ENCODE measurements at regions of chr5 and their contacts with region 1.

Region 1: DNA sequence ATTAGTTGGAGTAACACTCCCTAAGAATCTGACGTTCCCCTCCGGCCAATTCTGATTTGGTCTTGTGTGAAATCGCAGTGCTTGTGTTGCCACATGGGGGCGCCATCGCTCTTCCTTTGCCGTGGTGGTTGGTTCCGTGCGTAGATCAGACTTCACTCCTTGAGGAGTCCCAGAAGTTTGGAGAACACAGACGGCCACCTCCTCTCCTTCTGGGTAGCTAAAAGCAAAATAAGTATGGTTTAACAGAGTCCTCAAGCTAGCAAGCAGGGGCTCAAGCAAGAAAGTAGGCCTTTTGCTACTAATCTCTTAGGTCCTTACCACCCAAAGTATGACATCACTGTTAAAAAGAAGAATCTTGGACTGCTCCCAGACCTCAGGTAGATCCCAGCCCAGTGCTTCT is 59.5 kb downstream of the HSPA4 start:
- DNase-seq: peak; percentile 94
- H3K4me3 Mint-ChIP-seq: no peak overlapping the region
- H3K27ac Mint-ChIP-seq: no peak overlapping the region
- H3K4me1 Mint-ChIP-seq: peaks cover 28% of the 10 kb centered on the region
- H3K27me3 Mint-ChIP-seq: no peaks in the 10 kb centered on the region

Region 2: DNA sequence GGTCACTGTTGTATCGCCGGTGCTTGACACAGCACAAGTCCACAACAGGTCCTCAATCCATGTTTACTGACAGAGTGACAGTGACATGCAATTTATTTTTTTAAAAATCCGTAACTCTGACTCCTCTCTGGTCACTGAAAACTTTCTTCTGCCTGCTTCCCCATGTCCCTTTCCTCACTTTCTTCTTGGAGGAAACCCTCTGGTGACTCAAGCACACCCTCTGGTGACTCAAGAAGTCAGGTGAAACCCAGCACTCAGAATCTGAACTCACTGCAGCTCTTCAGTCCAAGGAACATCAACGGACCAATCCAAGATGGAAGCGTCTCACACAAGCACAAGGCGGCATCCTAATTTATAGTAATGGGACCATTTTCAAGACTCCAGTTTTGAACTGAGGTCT is 255.1 kb after region 1 on chr5:
- intact Hi-C with region 1: loop called (anchors 1 kb)
- DNase-seq: no peak
- H3K4me3 Mint-ChIP-seq: no peak overlapping the region
- H3K27ac Mint-ChIP-seq: no peak overlapping the region
- H3K4me1 Mint-ChIP-seq: no peaks in the 10 kb centered on the region
- H3K27me3 Mint-ChIP-seq: peaks cover 5% of the 10 kb centered on the region

Region 3: GRCh38 chr5:133460172-133460758 is 349.0 kb after region 1 on chr5:
- intact Hi-C with region 1: loop called (anchors 2 kb)
- DNase-seq: peak; percentile 78
- H3K4me3 Mint-ChIP-seq: no peak overlapping the region
- H3K27ac Mint-ChIP-seq: no peak overlapping the region
- H3K4me1 Mint-ChIP-seq: peaks cover 5% of the 10 kb centered on the region
- H3K27me3 Mint-ChIP-seq: peaks cover 2% of the 10 kb centered on the region

Region 4: GRCh38 chr5:133868946-133869518 is 757.7 kb after region 1 on chr5:
- intact Hi-C with region 1: loop called (anchors 5 kb)
- DNase-seq: peak; percentile 91
- H3K4me3 Mint-ChIP-seq: no peak overlapping the region
- H3K27ac Mint-ChIP-seq: peak overlapping the region; percentile 17
- H3K4me1 Mint-ChIP-seq: peaks cover 29% of the 10 kb centered on the region
- H3K27me3 Mint-ChIP-seq: no peaks in the 10 kb centered on the region